B cell (primary cell): ENCODE measurements at regions of chr4 and their contacts with region 1.

Region 1: DNA sequence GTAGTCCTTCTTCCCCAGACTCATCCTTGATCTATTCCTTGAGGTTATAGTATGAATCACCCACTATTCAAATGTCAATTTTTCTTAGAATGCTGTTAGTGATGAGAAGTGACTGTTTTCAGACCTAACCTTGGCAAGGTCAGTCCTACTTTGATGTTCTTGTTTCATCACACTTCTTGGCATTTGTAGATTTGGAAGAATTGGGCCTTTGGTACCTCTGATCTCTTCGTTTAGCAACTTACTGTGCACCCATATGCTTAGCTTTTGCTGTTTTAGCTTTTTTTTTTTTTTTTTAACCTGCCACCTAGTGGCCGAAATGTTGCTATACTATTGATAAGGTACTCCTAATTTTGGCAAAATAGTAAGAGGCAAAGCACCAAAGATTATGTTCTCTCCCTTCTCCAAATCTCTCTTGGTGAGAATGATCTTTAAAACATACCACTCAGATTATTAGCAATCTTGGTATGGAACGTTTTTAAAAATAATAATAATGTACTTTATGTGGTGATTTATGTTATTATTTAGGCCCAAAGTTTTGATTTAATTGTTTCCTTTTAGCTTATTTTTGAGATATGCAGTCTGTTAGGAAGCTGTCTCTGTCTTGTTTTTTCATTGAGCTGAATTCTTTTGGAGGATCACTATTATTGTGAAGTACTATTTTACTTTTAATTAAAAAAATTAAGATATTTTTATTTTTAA is 16.6 kb downstream of the DCK start:
- DNase-seq: peak; percentile 76
- ATAC-seq: peak; percentile 51
- H3K4me3 ChIP-seq: no peak overlapping the region
- H3K4me3 Mint-ChIP-seq: peak overlapping the region; percentile 59
- H3K27ac ChIP-seq: peak overlapping the region in 1 of 2 donors; percentile 93
- H3K27ac Mint-ChIP-seq: peak overlapping the region; percentile 76
- H3K4me1 ChIP-seq: peaks cover 39 to 42% of the 10 kb centered on the region in 2 donors
- H3K4me1 Mint-ChIP-seq: peaks cover 49% of the 10 kb centered on the region
- H3K27me3 ChIP-seq: no peaks in the 10 kb centered on the region
- H3K27me3 Mint-ChIP-seq: no peaks in the 10 kb centered on the region
- CTCF ChIP-seq: peak; percentile 85

Region 2: DNA sequence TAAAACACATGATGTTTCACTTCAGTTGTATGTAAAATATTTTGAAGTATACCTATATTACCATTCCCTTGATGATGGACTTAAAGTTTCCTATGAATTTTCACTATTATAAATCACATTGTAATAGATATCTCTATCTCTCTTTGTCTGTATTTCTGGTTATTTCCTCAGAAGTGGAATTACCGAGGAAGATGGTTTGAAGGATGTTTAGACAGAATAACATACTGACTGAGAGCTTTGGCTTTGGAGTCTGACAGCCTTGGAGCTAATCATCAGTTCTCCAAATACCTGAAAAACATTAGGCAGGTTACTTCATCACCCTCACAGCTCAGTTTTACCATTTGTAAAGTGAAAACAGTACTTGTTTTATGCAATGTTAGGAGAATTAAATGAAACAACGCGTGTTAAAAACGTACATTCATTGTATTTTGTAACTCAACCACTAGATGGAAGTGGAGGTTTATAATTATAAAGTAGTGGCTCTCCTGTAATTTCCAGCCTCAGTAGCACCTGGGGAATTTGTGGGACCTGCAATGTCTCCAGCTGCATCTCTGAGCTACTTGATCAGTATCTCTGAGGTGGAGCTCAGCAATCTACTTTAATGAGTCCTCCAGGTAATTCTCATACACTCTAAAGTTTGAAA is 358.1 kb before region 1 on chr4:
- CTCF ChIA-PET with region 1: interaction called, 12 read pairs
- POLR2A ChIA-PET with region 1: no interaction called
- intact Hi-C with region 1: loop called (anchors 1 kb)
- DNase-seq: peak; percentile 62
- ATAC-seq: peak; percentile 63
- H3K4me3 ChIP-seq: no peak overlapping the region
- H3K4me3 Mint-ChIP-seq: no peak overlapping the region
- H3K27ac ChIP-seq: no peak overlapping the region
- H3K27ac Mint-ChIP-seq: no peak overlapping the region
- H3K4me1 ChIP-seq: peaks cover 6 to 12% of the 10 kb centered on the region in 2 donors
- H3K4me1 Mint-ChIP-seq: peaks cover 8% of the 10 kb centered on the region
- H3K27me3 ChIP-seq: no peaks in the 10 kb centered on the region
- H3K27me3 Mint-ChIP-seq: no peaks in the 10 kb centered on the region
- CTCF ChIP-seq: peak; percentile 77

Region 3: GRCh38 chr4:70901984-70902576 is 108.0 kb before region 1 on chr4 and contains the start of gene MOB1B:
- CTCF ChIA-PET with region 1: interaction called, 10 read pairs
- POLR2A ChIA-PET with region 1: interaction called, 6 read pairs
- intact Hi-C with region 1: no loop called
- DNase-seq: peak; percentile 85
- ATAC-seq: peak; percentile 95
- H3K4me3 ChIP-seq: peak within 1 kb of the TSS; percentile 72 to 98 (median 77)
- H3K4me3 Mint-ChIP-seq: peak within 1 kb of the TSS; percentile 99
- H3K27ac ChIP-seq: peak within 1 kb of the TSS; percentile 41 to 76
- H3K27ac Mint-ChIP-seq: peak within 1 kb of the TSS; percentile 89
- H3K4me1 ChIP-seq: peaks cover 13% of the 10 kb centered on the region in 2 donors
- H3K4me1 Mint-ChIP-seq: peaks cover 29% of the 10 kb centered on the region
- H3K27me3 ChIP-seq: no peaks in the 10 kb centered on the region
- H3K27me3 Mint-ChIP-seq: no peaks in the 10 kb centered on the region
- CTCF ChIP-seq: peak; percentile 61
- total RNA-seq, gene MOB1B: 30.4 and 32.4 TPM in 2 replicates

Region 4: DNA sequence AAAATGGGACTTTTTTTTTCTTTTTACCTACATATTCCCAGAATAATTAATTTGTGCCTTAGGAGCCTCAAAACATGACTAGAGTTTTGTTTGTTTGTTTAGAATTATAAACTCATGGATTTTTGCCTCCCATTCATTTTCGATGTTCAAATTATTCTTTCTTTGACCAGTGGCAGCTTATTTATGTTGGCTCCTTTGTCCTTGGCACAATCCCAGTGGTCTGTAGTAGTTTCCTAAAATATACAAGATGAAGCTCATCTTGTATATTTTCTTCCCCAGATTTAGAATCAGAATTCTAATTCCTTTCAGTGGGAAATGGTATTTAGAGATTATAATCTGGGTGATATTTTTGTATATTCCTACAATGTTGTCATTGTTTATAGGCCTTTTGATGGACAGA is 10.6 kb after region 1 on chr4:
- CTCF ChIA-PET with region 1: interaction called, 35 read pairs
- POLR2A ChIA-PET with region 1: no interaction called
- intact Hi-C with region 1: no loop called
- DNase-seq: no peak
- ATAC-seq: no peak
- H3K4me3 ChIP-seq: no peak overlapping the region
- H3K4me3 Mint-ChIP-seq: no peak overlapping the region
- H3K27ac ChIP-seq: peak overlapping the region in 1 of 2 donors; percentile 7
- H3K27ac Mint-ChIP-seq: peak overlapping the region; percentile 15
- H3K4me1 ChIP-seq: no peaks in the 10 kb centered on the region
- H3K4me1 Mint-ChIP-seq: peaks cover 15% of the 10 kb centered on the region
- H3K27me3 ChIP-seq: no peaks in the 10 kb centered on the region
- H3K27me3 Mint-ChIP-seq: no peaks in the 10 kb centered on the region
- CTCF ChIP-seq: no peak